ENCODE measurements at regions of chr9 and their contacts with region 1.

Region 1: GRCh38 chr9:34759432-34760134 is 49.6 kb upstream of the CCL21 start:
- DNase-seq: no peak
- H3K4me3 ChIP-seq: no peak overlapping the region
- H3K27ac ChIP-seq: no peak overlapping the region
- H3K4me1 ChIP-seq: no peaks in the 10 kb centered on the region
- H3K27me3 ChIP-seq: no peaks in the 10 kb centered on the region
- CTCF ChIP-seq: no peak

Region 2: DNA sequence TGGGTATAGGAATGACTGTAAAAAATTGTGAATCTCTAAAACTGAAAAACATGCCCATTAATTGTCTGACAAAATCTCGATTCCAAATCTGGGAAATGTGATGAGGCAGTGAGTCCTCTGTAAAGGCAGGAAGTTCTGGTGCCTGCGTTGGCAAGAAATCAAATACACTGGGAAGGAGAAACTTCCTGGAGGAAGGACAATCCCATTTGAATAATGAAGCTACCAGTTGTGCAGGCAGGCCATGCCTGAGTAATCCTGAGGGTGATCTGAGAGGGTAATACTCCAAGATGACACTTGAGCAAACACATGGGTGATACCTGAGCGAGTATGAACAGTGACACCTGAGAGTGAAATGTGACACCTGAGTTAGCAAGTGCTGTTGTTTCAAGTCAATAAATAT is 480.2 kb before region 1 on chr9:
- CTCF ChIA-PET with region 1: no interaction called
- dilution Hi-C with region 1: no loop called
- in situ Hi-C with region 1: no loop called
- intact Hi-C with region 1: no loop called
- DNase-seq: peak; percentile 13
- H3K4me3 ChIP-seq: no peak overlapping the region
- H3K27ac ChIP-seq: no peak overlapping the region
- H3K4me1 ChIP-seq: peaks cover 8% of the 10 kb centered on the region
- H3K27me3 ChIP-seq: no peaks in the 10 kb centered on the region
- CTCF ChIP-seq: no peak

Region 3: GRCh38 chr9:34500623-34501267 is 258.8 kb before region 1 on chr9:
- CTCF ChIA-PET with region 1: no interaction called
- dilution Hi-C with region 1: no loop called
- in situ Hi-C with region 1: no loop called
- intact Hi-C with region 1: no loop called
- DNase-seq: peak; percentile 64
- H3K4me3 ChIP-seq: no peak overlapping the region
- H3K27ac ChIP-seq: no peak overlapping the region
- H3K4me1 ChIP-seq: peaks cover 29% of the 10 kb centered on the region
- H3K27me3 ChIP-seq: no peaks in the 10 kb centered on the region
- CTCF ChIP-seq: peak; percentile 98

Region 4: GRCh38 chr9:34809504-34810186 is 50.1 kb after region 1 on chr9:
- CTCF ChIA-PET with region 1: no interaction called
- dilution Hi-C with region 1: no loop called
- in situ Hi-C with region 1: no loop called
- intact Hi-C with region 1: no loop called
- DNase-seq: peak; percentile 9
- H3K4me3 ChIP-seq: peak overlapping the region in 2 of 3 experiments; percentile 27 to 40
- H3K27ac ChIP-seq: no peak overlapping the region
- H3K4me1 ChIP-seq: peaks cover 7% of the 10 kb centered on the region
- H3K27me3 ChIP-seq: peaks cover 4% of the 10 kb centered on the region
- CTCF ChIP-seq: peak; percentile 35 to 56

Region 5: GRCh38 chr9:34869390-34869789 is 109.8 kb after region 1 on chr9:
- CTCF ChIA-PET with region 1: interaction called, 4 read pairs
- dilution Hi-C with region 1: no loop called
- in situ Hi-C with region 1: no loop called
- intact Hi-C with region 1: loop called (anchors 2 kb)
- DNase-seq: peak; percentile 10
- H3K4me3 ChIP-seq: no peak overlapping the region
- H3K27ac ChIP-seq: no peak overlapping the region
- H3K4me1 ChIP-seq: no peaks in the 10 kb centered on the region
- H3K27me3 ChIP-seq: no peaks in the 10 kb centered on the region
- CTCF ChIP-seq: peak; percentile 13 to 49

Region 6: DNA sequence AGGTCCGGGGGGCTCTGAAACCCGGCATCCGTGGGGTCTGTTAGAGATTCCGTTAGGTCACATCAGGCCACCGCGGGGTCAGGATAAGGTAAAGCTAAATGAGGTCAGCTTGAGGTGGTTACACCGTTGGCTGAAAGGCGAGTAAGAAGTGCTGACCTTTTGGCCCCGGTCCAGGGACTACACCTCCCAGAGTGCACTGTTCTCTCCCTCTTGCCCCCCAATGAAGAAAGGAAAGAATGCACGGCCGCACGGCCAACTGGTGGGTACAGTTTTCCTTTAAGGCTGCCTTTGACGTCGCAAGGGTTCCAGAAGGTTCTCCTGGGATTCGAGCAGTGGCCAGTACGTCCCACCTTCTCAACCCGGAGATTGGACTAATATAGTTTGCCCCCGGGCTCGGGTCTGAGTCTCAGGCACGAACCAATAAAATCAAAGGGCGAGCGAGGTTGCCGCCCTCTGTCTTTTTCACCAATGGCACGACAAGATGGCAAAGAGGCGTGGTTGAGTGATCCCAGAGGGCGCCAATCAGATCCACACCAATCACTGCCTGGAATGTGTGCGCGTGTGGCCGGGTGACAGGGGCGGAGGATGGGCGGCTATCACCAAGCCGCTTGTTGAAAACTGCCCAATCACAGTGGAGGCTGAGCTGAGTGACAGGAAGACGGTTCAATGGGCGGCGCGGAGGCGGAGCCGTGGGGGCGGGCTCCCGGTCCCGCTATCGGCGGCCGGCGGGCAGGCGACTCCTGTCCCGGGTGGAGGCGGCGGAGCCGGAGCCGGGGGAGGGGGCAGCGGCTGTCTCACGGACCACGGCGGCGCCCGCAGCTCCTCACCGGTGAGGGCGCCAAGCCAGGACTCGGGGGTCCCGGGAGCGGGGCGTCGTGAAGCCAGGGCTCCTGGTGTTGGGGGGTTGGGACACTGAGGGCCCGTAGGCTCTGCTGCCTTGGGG is 229.7 kb after region 1 on chr9 and contains the start of gene DNAJB5:
- CTCF ChIA-PET with region 1: no interaction called
- dilution Hi-C with region 1: no loop called
- in situ Hi-C with region 1: no loop called
- intact Hi-C with region 1: loop called (anchors 1 kb)
- DNase-seq: peak; percentile 99
- H3K4me3 ChIP-seq: peak within 1 kb of the TSS; percentile 63 to 88 (median 72)
- H3K27ac ChIP-seq: peak within 1 kb of the TSS; percentile 52
- H3K4me1 ChIP-seq: peaks cover 41% of the 10 kb centered on the region
- H3K27me3 ChIP-seq: no peaks in the 10 kb centered on the region
- CTCF ChIP-seq: no peak
- total RNA-seq, gene DNAJB5: 8.4 to 10.0 TPM

Region 7: DNA sequence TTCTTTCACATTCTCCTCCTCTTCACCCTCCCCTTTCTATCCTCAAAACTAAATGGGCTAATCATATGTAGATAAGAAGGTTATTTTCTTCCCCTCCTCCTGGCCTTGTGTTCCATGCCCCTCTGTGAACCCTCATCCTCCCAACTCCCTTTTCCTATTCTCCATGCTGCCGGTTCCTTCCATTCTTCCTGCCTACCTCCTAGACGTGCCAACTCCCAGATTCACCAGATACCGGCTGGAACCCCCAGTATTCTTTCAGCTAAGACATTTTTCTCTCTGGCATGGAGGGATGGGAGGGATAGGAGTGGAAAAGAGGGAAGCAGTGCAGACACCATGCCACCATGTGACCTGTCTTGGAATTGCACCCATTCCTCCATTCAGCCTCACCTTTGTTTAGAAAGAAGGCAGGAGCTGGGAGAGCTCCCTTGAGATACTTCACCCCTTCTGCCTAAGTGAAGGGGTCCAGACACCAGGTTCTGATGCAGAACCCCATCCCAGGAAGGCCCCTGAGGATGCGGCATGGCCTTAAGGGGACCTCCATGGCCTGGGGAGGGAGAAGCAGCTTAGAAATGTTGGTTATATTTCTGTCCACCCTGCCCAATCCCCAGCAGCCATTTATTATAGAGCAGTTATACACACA is 234.8 kb after region 1 on chr9:
- CTCF ChIA-PET with region 1: no interaction called
- dilution Hi-C with region 1: no loop called
- in situ Hi-C with region 1: no loop called
- intact Hi-C with region 1: loop called (anchors 2 kb)
- DNase-seq: peak; percentile 43
- H3K4me3 ChIP-seq: no peak overlapping the region
- H3K27ac ChIP-seq: no peak overlapping the region
- H3K4me1 ChIP-seq: peaks cover 36% of the 10 kb centered on the region
- H3K27me3 ChIP-seq: no peaks in the 10 kb centered on the region
- CTCF ChIP-seq: peak; percentile 82

Region 8: DNA sequence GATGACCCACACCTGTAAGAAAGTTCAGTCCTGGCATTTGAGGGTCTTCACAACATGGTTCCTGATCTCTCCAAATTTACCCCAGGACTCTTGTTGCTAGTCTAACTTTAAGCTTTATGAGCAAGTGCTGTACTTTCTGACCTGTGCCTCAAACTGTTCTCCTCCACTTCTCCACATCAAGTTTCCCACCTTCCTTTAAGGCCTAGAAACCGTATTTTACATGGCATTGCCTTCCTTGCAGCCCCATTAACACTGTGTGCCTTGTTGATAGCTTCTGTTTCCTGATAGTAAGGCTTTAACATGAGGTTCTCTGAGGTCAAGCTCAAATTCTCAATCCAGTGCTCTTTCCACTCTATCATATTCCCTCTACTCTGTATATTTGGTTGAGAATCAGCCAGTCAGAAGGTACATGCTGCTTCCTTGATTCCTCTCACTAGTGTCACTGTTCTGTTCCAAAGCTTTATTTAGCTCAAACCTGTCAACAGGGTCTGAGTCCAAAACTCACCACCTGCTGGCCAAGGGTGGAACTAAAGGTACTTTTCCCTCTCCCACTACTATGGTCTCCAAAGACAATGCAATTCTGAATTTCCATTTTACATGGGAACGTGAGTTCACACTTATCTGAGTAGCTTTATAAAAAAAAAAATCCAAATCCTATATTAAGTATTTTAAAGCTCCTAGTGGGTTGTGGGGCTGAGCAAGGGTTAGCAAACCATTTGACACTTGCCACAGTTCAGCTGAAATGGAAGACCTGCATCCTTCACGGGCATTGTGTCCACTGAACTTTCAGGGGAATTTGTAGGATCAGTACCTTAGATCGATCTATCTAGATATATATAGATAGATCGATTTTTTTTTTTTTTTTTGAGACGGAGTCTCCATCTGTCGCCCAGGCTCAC is 291.7 kb after region 1 on chr9:
- CTCF ChIA-PET with region 1: interaction called, 4 read pairs
- dilution Hi-C with region 1: no loop called
- in situ Hi-C with region 1: no loop called
- intact Hi-C with region 1: loop called (anchors 2 kb)
- DNase-seq: peak; percentile 27
- H3K4me3 ChIP-seq: no peak overlapping the region
- H3K27ac ChIP-seq: no peak overlapping the region
- H3K4me1 ChIP-seq: peaks cover 4% of the 10 kb centered on the region
- H3K27me3 ChIP-seq: no peaks in the 10 kb centered on the region
- CTCF ChIP-seq: peak; percentile 61 to 68

Region 9: DNA sequence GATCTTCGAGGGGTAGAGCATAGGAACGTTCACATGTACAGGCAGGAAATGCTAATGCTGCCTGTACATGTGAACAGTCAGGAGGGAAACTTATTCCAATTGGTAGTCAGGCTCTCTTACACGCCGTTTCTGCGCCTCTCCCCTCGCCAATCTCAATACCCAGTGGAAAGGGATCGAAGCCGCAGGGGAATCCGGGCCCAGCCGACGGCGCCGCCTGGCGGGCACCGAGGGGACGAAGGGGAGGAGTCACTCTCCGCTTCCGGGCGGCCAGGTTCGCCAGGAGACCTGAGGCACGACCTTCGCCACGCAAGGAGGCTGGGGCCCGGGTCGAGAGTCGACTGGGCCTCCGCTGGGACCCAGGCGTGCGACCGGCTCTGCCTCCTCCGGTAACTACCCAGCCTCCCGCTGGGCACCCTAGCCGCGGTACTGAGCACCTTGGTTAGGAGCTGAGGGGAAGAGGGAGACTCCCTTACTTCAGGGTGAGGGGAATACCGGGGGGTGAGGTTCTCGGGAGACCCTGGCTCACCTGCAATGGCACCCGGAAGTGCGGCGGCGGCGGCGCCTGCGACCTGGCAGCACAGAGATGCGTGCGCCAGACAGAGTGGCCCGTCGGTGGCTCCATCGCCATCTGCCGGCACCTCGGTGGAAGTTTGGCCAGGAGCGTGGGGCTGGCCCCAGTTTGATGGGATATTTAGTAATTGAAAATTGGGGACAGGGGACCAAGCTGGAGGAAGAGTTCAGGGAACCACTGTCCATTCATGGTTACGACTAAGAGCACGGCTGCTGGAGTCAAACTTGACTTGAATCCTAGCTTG is 336.7 kb after region 1 on chr9 and contains the start of gene PIGO:
- CTCF ChIA-PET with region 1: no interaction called
- dilution Hi-C with region 1: no loop called
- in situ Hi-C with region 1: no loop called
- intact Hi-C with region 1: loop called (anchors 1 kb)
- DNase-seq: peak; percentile 84
- H3K4me3 ChIP-seq: peak within 1 kb of the TSS; percentile 76 to 100 (median 82)
- H3K27ac ChIP-seq: peak within 1 kb of the TSS; percentile 91
- H3K4me1 ChIP-seq: peaks cover 7% of the 10 kb centered on the region
- H3K27me3 ChIP-seq: no peaks in the 10 kb centered on the region
- CTCF ChIP-seq: peak; percentile 93
- total RNA-seq, gene PIGO: 17.8 to 33.3 TPM